Transverse colon (tissue), 4 donors: ENCODE measurements at regions of chr1 and their contacts with region 1.

Region 1: DNA sequence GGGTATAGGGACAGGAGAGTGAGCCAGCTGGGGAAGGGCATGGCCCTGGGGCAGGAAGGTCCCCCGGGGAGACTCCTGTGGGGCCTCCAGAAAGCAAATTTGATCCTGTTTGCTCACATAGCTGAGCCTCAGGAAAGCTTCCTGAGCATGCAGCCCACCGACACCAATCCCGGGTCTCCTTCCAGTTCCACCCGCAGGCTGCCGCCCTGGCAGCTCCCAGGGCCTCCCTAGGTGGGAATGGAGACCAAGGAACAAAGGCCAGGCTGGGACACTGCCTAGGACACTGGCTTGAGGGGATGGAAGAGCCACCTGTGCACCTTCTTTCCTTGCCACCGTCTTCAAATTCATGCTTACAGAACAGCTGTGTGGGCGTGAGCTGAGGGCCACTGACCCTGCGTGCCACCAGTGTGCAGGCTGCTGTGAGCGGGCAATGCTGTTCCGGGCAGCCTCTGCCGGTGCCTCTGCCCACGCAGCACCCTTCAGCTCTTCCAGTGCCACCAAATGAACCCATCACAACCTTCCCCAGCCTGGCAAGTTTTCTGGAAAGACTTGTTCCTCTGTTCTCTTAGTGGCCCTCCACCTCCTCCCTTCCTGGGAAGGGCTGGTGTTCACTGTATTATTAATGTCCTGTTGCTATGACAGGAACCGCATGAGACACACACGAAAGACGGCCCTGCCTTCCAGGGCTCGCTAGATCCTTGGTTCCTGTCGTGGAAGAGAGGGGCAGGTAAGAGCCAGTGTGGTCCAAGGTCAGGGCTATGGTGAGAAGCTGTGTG is 53.6 kb downstream of the ACBD3 start:
- DNase-seq: no peak
- H3K4me3 ChIP-seq: no peak overlapping the region
- H3K27ac ChIP-seq: peak overlapping the region; percentile 47 to 68 (median 57)
- H3K4me1 ChIP-seq: peaks cover 34 to 56% (median 42%) of the 10 kb centered on the region in 4 donors
- H3K27me3 ChIP-seq: no peaks in the 10 kb centered on the region
- CTCF ChIP-seq: no peak
- EP300 ChIP-seq: no peak
- POLR2A ChIP-seq: peak; percentile 15

Region 2: GRCh38 chr1:226186124-226187018 is 53.5 kb after region 1 on chr1 and contains the start of gene ACBD3:
- in situ Hi-C with region 1: loop called in 1 of 4 experiments (anchors 5 kb)
- intact Hi-C with region 1: no loop called
- DNase-seq: peak; percentile 90
- H3K4me3 ChIP-seq: peak within 1 kb of the TSS; percentile 66 to 97 (median 83)
- H3K27ac ChIP-seq: peak within 1 kb of the TSS; percentile 93 to 98 (median 95)
- H3K4me1 ChIP-seq: peaks cover 28 to 48% (median 36%) of the 10 kb centered on the region in 4 donors
- H3K27me3 ChIP-seq: no peaks in the 10 kb centered on the region
- CTCF ChIP-seq: peak in 3 of 5 experiments; percentile 21 to 47 (median 39)
- EP300 ChIP-seq: no peak
- POLR2A ChIP-seq: peak; percentile 87
- total RNA-seq, gene ACBD3: 19.3 to 44.6 (median 30.7) TPM

Region 3: GRCh38 chr1:226195144-226195543 is 62.2 kb after region 1 on chr1:
- in situ Hi-C with region 1: loop called in 1 of 4 experiments (anchors 5 kb)
- intact Hi-C with region 1: loop called (anchors 5 kb)
- DNase-seq: no peak
- H3K4me3 ChIP-seq: no peak overlapping the region
- H3K27ac ChIP-seq: no peak overlapping the region
- H3K4me1 ChIP-seq: no peaks in the 10 kb centered on the region
- H3K27me3 ChIP-seq: no peaks in the 10 kb centered on the region
- CTCF ChIP-seq: no peak
- EP300 ChIP-seq: no peak
- POLR2A ChIP-seq: no peak